Transverse colon (tissue), 4 donors: ENCODE measurements at regions of chr10 and their contacts with region 1.

Region 1: DNA sequence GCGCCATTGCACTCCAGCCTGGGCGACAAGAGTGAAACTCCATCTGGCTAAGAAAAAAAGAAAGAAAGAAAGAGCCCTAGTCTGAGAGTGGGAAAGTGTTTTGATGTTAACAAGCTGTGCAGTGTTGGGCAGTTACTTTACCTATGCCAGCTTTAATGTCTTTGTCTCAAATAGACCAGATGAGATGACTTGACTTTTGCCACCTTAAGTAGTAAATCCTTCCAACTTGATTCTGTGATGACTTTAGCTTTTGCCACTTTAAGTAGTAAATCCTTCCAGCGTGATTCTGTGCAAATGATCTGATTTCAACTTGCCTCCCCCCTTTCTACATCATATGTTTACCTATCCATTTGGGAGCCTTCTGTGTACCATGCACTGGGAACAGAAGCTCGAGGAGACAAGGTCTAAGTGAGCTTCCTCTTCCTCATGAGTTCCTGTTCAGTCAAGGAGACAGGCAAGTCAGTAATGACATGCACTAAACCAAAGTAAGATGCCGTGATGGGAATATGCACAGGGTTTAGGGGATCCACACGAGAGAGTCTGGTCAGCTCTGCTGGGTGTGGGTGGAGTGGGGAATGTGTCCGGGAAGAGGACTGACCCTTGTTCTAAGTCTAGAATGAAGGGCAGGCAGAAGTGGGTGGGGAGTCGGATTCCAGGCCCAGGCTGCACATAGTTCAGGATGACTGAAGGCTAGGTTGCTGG is 17.2 kb downstream of the INPP5F start:
- DNase-seq: peak; percentile 20
- H3K4me3 ChIP-seq: no peak overlapping the region
- H3K27ac ChIP-seq: no peak overlapping the region
- H3K4me1 ChIP-seq: peaks cover 3 to 13% (median 7%) of the 10 kb centered on the region in 4 donors
- H3K27me3 ChIP-seq: no peaks in the 10 kb centered on the region
- CTCF ChIP-seq: no peak
- EP300 ChIP-seq: no peak
- POLR2A ChIP-seq: no peak

Region 2: DNA sequence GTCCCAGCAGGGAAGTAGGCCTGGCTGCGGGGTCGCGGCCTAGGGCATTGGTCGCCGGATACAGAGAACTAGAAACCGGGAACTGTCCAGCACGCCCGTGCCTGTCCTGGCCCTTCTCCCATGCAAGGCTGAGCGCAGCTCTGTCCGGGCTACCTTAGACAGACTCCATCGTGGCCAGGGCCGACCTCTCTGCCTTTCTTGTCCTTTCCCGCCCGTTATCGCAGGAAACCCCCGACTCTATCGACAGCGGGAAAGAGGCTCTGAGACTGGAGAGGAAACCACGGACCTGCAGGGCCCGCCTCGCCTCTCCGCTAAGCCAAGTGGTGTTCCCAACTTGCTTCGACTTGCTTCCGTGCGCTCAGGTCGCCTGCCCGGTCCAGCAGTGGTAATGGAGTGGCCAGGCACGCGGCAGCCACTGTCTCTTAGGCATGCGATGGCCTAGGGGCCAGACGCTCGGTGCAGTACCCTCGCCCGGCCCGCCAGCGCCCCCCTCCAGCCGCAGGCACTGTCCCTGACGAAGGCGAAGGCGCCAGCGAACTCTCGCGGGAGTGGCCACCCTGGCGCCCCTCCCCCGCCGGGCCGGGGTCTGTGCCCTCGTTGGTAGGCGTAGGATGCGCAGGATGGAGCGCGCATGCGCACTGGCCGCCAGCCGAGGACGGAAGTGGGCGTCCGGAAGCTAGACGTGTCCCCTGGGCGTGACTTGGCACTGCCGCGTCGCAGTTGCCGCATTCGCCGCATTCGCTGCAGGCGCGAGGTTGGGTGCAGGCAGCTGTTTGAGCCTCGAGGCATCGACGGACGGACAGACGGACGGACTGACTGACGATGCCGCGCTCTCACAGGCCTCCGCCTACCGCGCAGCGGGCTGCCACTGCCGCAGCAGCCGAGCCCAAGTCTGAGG is 75.1 kb after region 1 on chr10:
- in situ Hi-C with region 1: no loop called
- intact Hi-C with region 1: loop called (anchors 10 kb)
- DNase-seq: peak; percentile 29
- H3K4me3 ChIP-seq: peak overlapping the region in 2 of 4 donors; percentile 11 to 14
- H3K27ac ChIP-seq: peak overlapping the region in 2 of 4 donors; percentile 15 to 67
- H3K4me1 ChIP-seq: no peaks in the 10 kb centered on the region
- H3K27me3 ChIP-seq: no peaks in the 10 kb centered on the region
- CTCF ChIP-seq: no peak
- EP300 ChIP-seq: no peak
- POLR2A ChIP-seq: no peak

Region 3: DNA sequence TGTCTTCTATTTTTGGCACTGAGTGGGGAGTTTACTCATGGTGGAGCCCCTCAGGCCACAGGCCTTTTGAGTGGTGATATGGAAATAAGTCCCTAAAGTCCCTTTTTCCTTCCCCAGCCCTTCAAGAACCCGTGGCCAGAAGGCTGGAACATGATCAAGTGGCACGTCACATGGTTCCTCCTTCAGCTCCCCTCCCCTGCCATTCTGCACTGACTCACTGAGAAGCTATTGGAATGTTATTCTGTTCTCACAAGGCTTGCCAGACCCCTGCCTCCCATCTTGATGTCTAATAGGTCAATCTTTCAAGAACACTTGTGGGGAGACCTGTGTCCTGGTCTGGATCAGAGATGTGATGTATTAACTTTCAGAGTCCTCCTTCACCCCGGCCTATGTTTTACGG is 429.3 kb after region 1 on chr10:
- in situ Hi-C with region 1: no loop called
- intact Hi-C with region 1: no loop called
- DNase-seq: no peak
- H3K4me3 ChIP-seq: no peak overlapping the region
- H3K27ac ChIP-seq: no peak overlapping the region
- H3K4me1 ChIP-seq: no peaks in the 10 kb centered on the region
- H3K27me3 ChIP-seq: no peaks in the 10 kb centered on the region
- CTCF ChIP-seq: no peak
- EP300 ChIP-seq: no peak
- POLR2A ChIP-seq: no peak

Region 4: GRCh38 chr10:120400601-120401000 is 657.5 kb after region 1 on chr10:
- in situ Hi-C with region 1: no loop called
- intact Hi-C with region 1: no loop called
- DNase-seq: no peak
- H3K4me3 ChIP-seq: no peak overlapping the region
- H3K27ac ChIP-seq: no peak overlapping the region
- H3K4me1 ChIP-seq: no peaks in the 10 kb centered on the region
- H3K27me3 ChIP-seq: no peaks in the 10 kb centered on the region
- CTCF ChIP-seq: no peak
- EP300 ChIP-seq: no peak
- POLR2A ChIP-seq: no peak